Adrenal gland (tissue), 19 donors: ENCODE measurements at regions of chr15 and their contacts with region 1.

Region 1: DNA sequence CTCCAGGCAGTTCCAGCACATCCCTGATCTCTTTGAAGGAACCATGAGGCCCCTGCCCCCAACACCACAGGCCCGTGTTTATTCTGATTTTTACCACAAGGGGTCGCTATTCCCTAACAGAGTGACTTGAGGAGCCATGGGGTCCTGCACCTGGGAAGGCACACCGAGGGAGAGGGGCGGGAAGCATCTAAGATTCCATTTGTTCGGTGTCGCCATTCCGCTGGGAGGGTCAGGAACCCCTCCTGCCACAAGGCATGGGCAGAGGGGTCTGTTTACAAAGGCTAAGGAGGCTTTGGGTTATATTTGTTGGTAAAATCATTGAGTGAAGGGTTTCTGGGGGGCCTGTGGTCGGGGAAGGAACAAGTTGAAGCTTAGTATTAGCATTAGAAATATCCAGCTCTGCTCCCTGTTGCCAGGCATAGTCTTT is 77.1 kb downstream of the WDR76 start:
- DNase-seq: peak; percentile 33 to 75 (median 51)
- H3K4me3 ChIP-seq: no peak overlapping the region
- H3K27ac ChIP-seq: no peak overlapping the region
- H3K4me1 ChIP-seq: no peaks in the 10 kb centered on the region
- H3K27me3 ChIP-seq: no peaks in the 10 kb centered on the region
- CTCF ChIP-seq: peak; percentile 79 to 92 (median 86)
- POLR2A ChIP-seq: no peak

Region 2: GRCh38 chr15:44058126-44058525 is 154.2 kb after region 1 on chr15:
- intact Hi-C with region 1: loop called in 1 of 2 experiments (anchors 10 kb)
- DNase-seq: no peak
- H3K4me3 ChIP-seq: no peak overlapping the region
- H3K27ac ChIP-seq: no peak overlapping the region
- H3K4me1 ChIP-seq: no peaks in the 10 kb centered on the region
- H3K27me3 ChIP-seq: no peaks in the 10 kb centered on the region
- CTCF ChIP-seq: no peak
- POLR2A ChIP-seq: no peak

Region 3: DNA sequence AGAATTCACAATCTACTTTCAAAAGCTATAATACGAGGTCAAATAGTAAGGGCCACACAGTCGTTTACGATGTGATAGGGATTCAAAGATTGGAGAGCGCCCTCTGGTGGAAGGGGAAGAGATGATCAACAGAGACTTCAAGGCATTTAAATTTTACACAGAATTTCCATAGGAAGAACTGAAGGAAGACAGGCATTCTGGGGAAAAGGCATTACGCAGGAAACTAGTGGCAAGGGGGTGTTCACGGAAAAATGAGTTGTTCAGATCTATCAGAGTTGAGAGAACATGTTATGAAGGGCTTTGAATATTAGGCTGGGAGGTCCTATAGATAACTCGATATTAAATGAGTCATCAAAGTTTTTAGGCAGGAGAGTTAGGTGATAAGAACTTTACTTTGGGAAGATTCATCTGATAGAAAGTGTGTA is 162.5 kb after region 1 on chr15:
- intact Hi-C with region 1: loop called in 1 of 2 experiments (anchors 5 kb)
- DNase-seq: peak; percentile 51 to 79 (median 65)
- H3K4me3 ChIP-seq: no peak overlapping the region
- H3K27ac ChIP-seq: no peak overlapping the region
- H3K4me1 ChIP-seq: no peaks in the 10 kb centered on the region
- H3K27me3 ChIP-seq: no peaks in the 10 kb centered on the region
- CTCF ChIP-seq: peak; percentile 74 to 93 (median 78)
- POLR2A ChIP-seq: no peak

Region 4: GRCh38 chr15:44173813-44174212 is 269.9 kb after region 1 on chr15:
- intact Hi-C with region 1: no loop called
- DNase-seq: no peak
- H3K4me3 ChIP-seq: no peak overlapping the region
- H3K27ac ChIP-seq: no peak overlapping the region
- H3K4me1 ChIP-seq: no peaks in the 10 kb centered on the region
- H3K27me3 ChIP-seq: no peaks in the 10 kb centered on the region
- CTCF ChIP-seq: no peak
- POLR2A ChIP-seq: no peak

Region 5: GRCh38 chr15:44215594-44215993 is 311.7 kb after region 1 on chr15:
- intact Hi-C with region 1: loop called in 1 of 2 experiments (anchors 10 kb)
- DNase-seq: peak in 5 of 7 donors; percentile 31 to 57 (median 44)
- H3K4me3 ChIP-seq: no peak overlapping the region
- H3K27ac ChIP-seq: peak overlapping the region in 3 of 5 donors; percentile 22 to 44 (median 26)
- H3K4me1 ChIP-seq: peaks cover 0 to 4% of the 10 kb centered on the region in 2 donors
- H3K27me3 ChIP-seq: no peaks in the 10 kb centered on the region
- CTCF ChIP-seq: no peak
- POLR2A ChIP-seq: no peak

Region 6: DNA sequence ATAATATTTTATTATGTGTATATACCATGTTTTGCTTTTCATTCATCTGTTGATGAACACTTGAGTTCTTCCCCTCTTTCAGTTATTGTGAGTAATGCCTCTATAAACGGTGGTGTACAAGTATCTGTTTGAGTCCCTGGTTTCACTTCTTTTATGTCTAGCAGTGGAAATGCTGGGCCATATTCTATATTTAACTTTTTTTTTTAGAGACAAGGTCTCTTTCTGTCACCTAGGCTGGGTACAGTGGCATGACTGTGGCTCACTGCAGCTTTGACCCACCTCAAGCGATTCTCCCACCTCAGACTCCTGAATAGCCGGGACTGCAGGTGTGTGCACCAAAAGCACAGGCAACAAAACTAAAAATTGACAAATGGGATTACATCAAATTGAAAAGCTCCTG is 404.5 kb after region 1 on chr15:
- intact Hi-C with region 1: no loop called
- DNase-seq: no peak
- H3K4me3 ChIP-seq: no peak overlapping the region
- H3K27ac ChIP-seq: no peak overlapping the region
- H3K4me1 ChIP-seq: peaks cover 6 to 38% of the 10 kb centered on the region in 2 donors
- H3K27me3 ChIP-seq: no peaks in the 10 kb centered on the region
- CTCF ChIP-seq: no peak
- POLR2A ChIP-seq: no peak